GM12878 (cell line): ENCODE measurements at regions of chr2 and their contacts with region 1.

Region 1: GRCh38 chr2:226906163-226906693 is 70.4 kb downstream of the RHBDD1 start:
- DNase-seq: peak; percentile 82
- ATAC-seq: peak; percentile 91
- H3K4me3 ChIP-seq: peak overlapping the region; percentile 53
- H3K27ac ChIP-seq: peak overlapping the region; percentile 84
- H3K4me1 ChIP-seq: peaks cover 48% of the 10 kb centered on the region
- H3K27me3 ChIP-seq: no peaks in the 10 kb centered on the region
- CTCF ChIP-seq: no peak
- EP300 ChIP-seq: 0 out of 4 replicates have a peak, but pooled peaks of 1 of the 2 experiments have one; percentile 25
- POLR2A ChIP-seq: no peak
- RAD21 ChIP-seq: no peak

Region 2: DNA sequence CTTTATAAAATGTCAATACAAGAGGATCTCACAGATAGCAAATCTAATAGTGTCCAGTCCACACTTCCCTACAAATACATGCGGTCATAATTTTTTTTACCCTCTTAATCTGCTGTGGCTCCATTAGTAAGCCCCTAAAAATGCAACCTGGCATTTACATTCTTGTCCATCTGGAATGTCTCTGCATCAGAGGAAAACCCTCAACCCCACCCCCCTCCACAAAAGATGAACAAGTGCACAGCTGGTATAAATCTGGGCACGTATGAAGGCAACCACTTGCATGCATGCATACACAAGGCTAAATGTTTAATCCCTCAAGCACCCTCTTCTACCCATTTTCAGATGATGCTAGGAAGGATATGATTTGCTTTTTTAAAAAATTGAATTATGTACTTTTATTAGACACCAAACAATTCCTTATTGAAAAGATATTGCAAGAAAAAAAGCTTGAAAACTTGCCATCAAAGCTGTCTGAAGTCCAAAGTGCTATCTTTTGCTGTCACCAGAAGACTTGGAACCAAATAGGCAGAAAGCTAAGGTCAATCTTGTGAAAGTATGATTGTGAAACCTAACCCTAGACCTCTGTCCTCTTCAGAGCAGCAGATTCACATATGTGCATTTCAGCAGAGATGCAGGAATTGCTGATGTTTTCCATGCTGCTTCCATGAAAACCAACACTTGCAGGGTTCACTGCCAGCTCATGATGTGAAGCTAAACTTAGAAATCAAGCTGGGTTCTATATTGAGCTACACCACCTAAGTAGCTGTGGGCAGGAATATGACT is 145.6 kb before region 1 on chr2:
- CTCF ChIA-PET with region 1: no interaction called
- POLR2A ChIA-PET with region 1: no interaction called
- RAD21 ChIA-PET with region 1: no interaction called
- SMC1A ChIA-PET with region 1: no interaction called
- in situ Hi-C with region 1: no loop called
- intact Hi-C with region 1: no loop called
- DNase-seq: no peak
- ATAC-seq: no peak
- H3K4me3 ChIP-seq: no peak overlapping the region
- H3K27ac ChIP-seq: no peak overlapping the region
- H3K4me1 ChIP-seq: no peaks in the 10 kb centered on the region
- H3K27me3 ChIP-seq: no peaks in the 10 kb centered on the region
- CTCF ChIP-seq: no peak
- EP300 ChIP-seq: no peak
- POLR2A ChIP-seq: no peak
- RAD21 ChIP-seq: no peak

Region 3: GRCh38 chr2:226971084-226971483 is 64.9 kb after region 1 on chr2:
- CTCF ChIA-PET with region 1: no interaction called
- POLR2A ChIA-PET with region 1: no interaction called
- RAD21 ChIA-PET with region 1: no interaction called
- SMC1A ChIA-PET with region 1: no interaction called
- in situ Hi-C with region 1: no loop called
- intact Hi-C with region 1: loop called (anchors 2 kb)
- DNase-seq: no peak
- ATAC-seq: peak; percentile 75
- H3K4me3 ChIP-seq: peak overlapping the region; percentile 56; the same call in 1 of the 2 replicates
- H3K27ac ChIP-seq: peak overlapping the region; percentile 75
- H3K4me1 ChIP-seq: peaks cover 5% of the 10 kb centered on the region; the same call in 1 of the 2 replicates
- H3K27me3 ChIP-seq: no peaks in the 10 kb centered on the region
- CTCF ChIP-seq: no peak
- EP300 ChIP-seq: no peak
- POLR2A ChIP-seq: no peak
- RAD21 ChIP-seq: no peak